ENCODE measurements at regions of chrX and their contacts with region 1.

Region 1: GRCh38 chrX:154443992-154444754 is at the start of gene FAM50A:
- DNase-seq: peak; percentile 92
- total RNA-seq, gene FAM50A: 43.7 TPM

Region 2: DNA sequence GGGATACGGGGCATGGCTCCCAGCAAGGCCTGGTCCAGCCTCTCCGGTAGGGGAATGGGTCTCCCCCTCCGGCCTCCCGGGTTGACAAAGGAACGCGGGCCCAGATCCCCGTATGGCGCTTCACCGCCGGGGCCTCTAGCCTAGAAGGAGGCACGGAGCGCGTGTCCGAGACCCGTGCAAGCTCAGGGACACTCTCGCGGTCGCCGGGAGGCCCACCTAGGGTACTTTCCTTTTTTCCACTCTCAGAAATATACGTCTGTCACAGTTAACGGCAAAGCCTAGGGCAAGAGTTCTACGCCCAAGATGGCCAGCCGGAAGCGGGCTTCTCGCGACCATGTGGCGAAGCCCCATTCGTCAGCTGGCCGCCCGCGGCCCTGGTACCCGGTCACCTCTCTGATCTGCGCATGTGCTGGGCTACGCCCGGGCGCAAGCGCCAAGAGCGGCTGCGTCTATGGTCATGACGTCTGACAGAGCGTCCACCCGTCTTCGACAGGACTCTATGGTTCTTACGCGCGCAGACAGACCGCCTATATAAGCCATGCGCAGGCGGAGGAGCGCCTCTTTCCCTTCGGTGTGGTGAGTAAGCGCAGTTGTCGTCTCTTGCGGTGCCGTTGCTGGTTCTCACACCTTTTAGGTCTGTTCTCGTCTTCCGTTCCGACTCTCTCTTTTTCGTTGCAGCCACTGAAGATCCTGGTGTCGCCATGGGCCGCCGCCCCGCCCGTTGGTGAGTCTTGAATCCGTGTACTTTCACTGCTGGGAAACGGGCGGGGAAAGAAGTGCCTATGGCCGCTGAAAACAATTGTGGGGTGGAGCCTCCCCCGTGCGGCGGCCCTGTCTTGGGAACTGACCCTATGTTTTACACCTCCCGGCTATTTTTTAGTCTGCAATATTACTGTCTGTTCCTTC is 46.1 kb before region 1 on chrX and contains the start of gene RPL10:
- intact Hi-C with region 1: loop called (anchors 10 kb)
- DNase-seq: peak; percentile 97
- total RNA-seq, gene RPL10: 1,520 TPM

Region 3: GRCh38 chrX:154478728-154479622 is 34.8 kb after region 1 on chrX and contains the start of gene LAGE3:
- intact Hi-C with region 1: loop called (anchors 2 kb)
- DNase-seq: peak; percentile 97
- total RNA-seq, gene LAGE3: 13.9 TPM

Measured in cardiac septum (tissue), 1 donor.